ENCODE measurements at regions of chr10 and their contacts with region 1.

Region 1: DNA sequence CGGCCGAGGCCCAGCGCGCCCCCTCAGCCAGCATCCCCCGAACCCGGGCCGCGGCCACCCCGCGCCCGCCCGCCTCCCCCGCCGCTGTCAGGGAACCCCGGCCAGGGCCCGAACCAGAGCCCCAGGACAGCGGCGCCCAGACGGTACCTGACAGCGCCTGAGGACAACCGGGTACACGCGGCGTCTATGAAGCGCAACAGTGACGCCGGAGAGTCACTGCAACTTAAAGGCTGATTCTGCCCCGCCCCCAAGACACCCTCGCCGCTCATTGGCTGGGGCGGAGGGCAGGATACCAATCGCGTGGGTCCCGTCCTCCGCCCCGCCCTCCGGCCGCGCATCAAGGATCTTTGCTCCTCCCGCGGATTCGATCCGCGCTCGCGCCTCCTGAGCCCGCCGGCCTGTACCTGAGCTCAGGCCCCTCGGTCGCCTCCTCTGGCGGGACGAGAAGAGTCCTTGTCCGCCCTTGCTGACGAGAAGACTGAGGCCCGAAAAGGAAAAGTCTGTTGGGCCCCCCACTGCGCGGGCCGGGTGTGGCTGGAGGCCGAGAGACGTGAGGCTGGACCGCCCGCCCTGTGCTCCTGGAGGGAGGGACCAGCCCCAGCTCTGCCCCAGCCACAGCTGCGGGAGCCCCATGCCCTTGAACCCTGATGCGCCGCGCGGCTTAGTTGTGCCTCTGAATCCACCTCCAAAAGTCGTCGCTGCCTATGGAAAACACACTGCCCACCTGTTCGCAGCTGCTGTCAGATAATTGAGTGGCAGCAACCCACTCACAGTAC is at the start of gene OAT:
- DNase-seq: peak; percentile 90 to 97 (median 93)
- ATAC-seq: peak; percentile 86
- H3K4me3 ChIP-seq: peak within 1 kb of the TSS; percentile 69
- H3K27ac ChIP-seq: peak within 1 kb of the TSS; percentile 75
- H3K4me1 ChIP-seq: peaks cover 37 to 38% of the 10 kb centered on the region in 2 experiments
- H3K27me3 ChIP-seq: no peaks in the 10 kb centered on the region
- CTCF ChIP-seq: peak in 2 of 3 experiments; percentile 36 to 41; a peak in 4 of 6 replicates
- EP300 ChIP-seq: no peak
- POLR2A ChIP-seq: peak; percentile 94
- RAD21 ChIP-seq: no peak
- polyA plus RNA-seq, gene OAT: 294 to 312 TPM

Region 2: GRCh38 chr10:124176349-124177176 is 242.4 kb before region 1 on chr10:
- CTCF ChIA-PET with region 1: no interaction called
- POLR2A ChIA-PET with region 1: no interaction called
- in situ Hi-C with region 1: no loop called
- intact Hi-C with region 1: no loop called
- DNase-seq: no peak
- ATAC-seq: no peak
- H3K4me3 ChIP-seq: no peak overlapping the region
- H3K27ac ChIP-seq: no peak overlapping the region
- H3K4me1 ChIP-seq: no peaks in the 10 kb centered on the region
- H3K27me3 ChIP-seq: peaks cover 0 to 34% of the 10 kb centered on the region in 2 experiments; a peak in 2 of 5 replicates
- CTCF ChIP-seq: no peak
- EP300 ChIP-seq: no peak
- POLR2A ChIP-seq: no peak
- RAD21 ChIP-seq: no peak

Region 3: GRCh38 chr10:124384172-124384571 is 34.7 kb before region 1 on chr10:
- CTCF ChIA-PET with region 1: no interaction called
- POLR2A ChIA-PET with region 1: no interaction called
- in situ Hi-C with region 1: no loop called
- intact Hi-C with region 1: no loop called
- DNase-seq: no peak
- ATAC-seq: no peak
- H3K4me3 ChIP-seq: no peak overlapping the region
- H3K27ac ChIP-seq: no peak overlapping the region
- H3K4me1 ChIP-seq: peaks cover 0 to 9% of the 10 kb centered on the region in 2 experiments; a peak in 2 of 5 replicates
- H3K27me3 ChIP-seq: peaks cover 10 to 49% of the 10 kb centered on the region in 2 experiments; a peak in 4 of 5 replicates
- CTCF ChIP-seq: no peak
- EP300 ChIP-seq: no peak
- POLR2A ChIP-seq: no peak
- RAD21 ChIP-seq: no peak

Region 4: GRCh38 chr10:124403548-124403947 is 15.4 kb before region 1 on chr10:
- CTCF ChIA-PET with region 1: no interaction called
- POLR2A ChIA-PET with region 1: interaction called, 10 read pairs
- in situ Hi-C with region 1: no loop called
- intact Hi-C with region 1: no loop called
- DNase-seq: peak; percentile 27 to 78 (median 41)
- ATAC-seq: peak; percentile 99
- H3K4me3 ChIP-seq: no peak overlapping the region
- H3K27ac ChIP-seq: 0 out of 3 replicates have a peak overlapping the region, but pooled peaks have one; percentile 8
- H3K4me1 ChIP-seq: no peaks in the 10 kb centered on the region; a peak in 2 of 5 replicates
- H3K27me3 ChIP-seq: no peaks in the 10 kb centered on the region
- CTCF ChIP-seq: peak; percentile 50 to 61 (median 56); a peak in 5 of 6 replicates
- EP300 ChIP-seq: no peak
- POLR2A ChIP-seq: no peak
- RAD21 ChIP-seq: peak in 1 of 2 experiments; percentile 33; a peak in 1 of 4 replicates

Region 5: GRCh38 chr10:124461438-124462347 is 42.8 kb after region 1 on chr10 and contains the start of gene LHPP:
- CTCF ChIA-PET with region 1: no interaction called
- POLR2A ChIA-PET with region 1: interaction called, 4 read pairs
- in situ Hi-C with region 1: no loop called
- intact Hi-C with region 1: loop called (anchors 2 kb)
- DNase-seq: peak; percentile 81 to 88 (median 83)
- ATAC-seq: peak; percentile 97
- H3K4me3 ChIP-seq: peak within 1 kb of the TSS; percentile 76
- H3K27ac ChIP-seq: peak within 1 kb of the TSS; percentile 75
- H3K4me1 ChIP-seq: peaks cover 24 to 29% of the 10 kb centered on the region in 2 experiments
- H3K27me3 ChIP-seq: no peaks in the 10 kb centered on the region
- CTCF ChIP-seq: peak in 2 of 3 experiments; percentile 3 to 8; a peak in 1 of 6 replicates
- EP300 ChIP-seq: no peak
- POLR2A ChIP-seq: peak; percentile 63
- RAD21 ChIP-seq: no peak
- polyA plus RNA-seq, gene LHPP: 0.34 to 0.56 TPM

Region 6: GRCh38 chr10:124486635-124487034 is 67.7 kb after region 1 on chr10:
- CTCF ChIA-PET with region 1: no interaction called
- POLR2A ChIA-PET with region 1: interaction called, 3 read pairs
- in situ Hi-C with region 1: no loop called
- intact Hi-C with region 1: loop called (anchors 5 kb)
- DNase-seq: peak; percentile 74 to 85 (median 80)
- ATAC-seq: peak; percentile 94
- H3K4me3 ChIP-seq: no peak overlapping the region
- H3K27ac ChIP-seq: no peak overlapping the region; the same call in 2 of the 3 replicates
- H3K4me1 ChIP-seq: peaks cover 8 to 16% of the 10 kb centered on the region in 2 experiments; a peak in 4 of 5 replicates
- H3K27me3 ChIP-seq: no peaks in the 10 kb centered on the region
- CTCF ChIP-seq: no peak
- EP300 ChIP-seq: peak; percentile 75
- POLR2A ChIP-seq: no peak
- RAD21 ChIP-seq: no peak